ENCODE measurements at regions of chr9 and their contacts with region 1.

Region 1: DNA sequence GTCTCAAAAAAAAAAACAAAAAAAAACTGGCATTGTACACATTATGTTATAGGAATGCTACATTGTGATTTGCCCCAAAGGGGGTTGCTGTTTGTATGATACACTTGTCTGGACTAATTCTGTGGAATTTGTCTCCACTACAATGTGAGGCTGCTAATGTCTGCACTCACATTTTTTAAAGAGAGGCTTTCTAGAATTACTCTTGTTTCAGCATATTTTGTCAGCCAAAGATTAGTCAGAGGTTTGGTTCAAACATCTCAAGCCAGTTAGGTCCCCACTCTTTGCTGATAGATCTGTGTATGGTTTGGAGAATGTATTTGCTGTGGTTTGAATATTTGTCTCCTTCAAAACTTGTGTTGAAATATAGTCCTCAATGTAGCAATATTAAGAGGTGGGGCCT is 59.3 kb upstream of the ZNF169 start:
- DNase-seq: no peak
- ATAC-seq: no peak
- H3K4me3 ChIP-seq: no peak overlapping the region
- H3K4me3 Mint-ChIP-seq: no peak overlapping the region
- H3K27ac ChIP-seq: no peak overlapping the region
- H3K27ac Mint-ChIP-seq: peak overlapping the region in 1 of 9 donors; percentile 27
- H3K4me1 ChIP-seq: no peaks in the 10 kb centered on the region
- H3K4me1 Mint-ChIP-seq: peaks cover 0 to 6% (median 0%) of the 10 kb centered on the region in 7 donors
- H3K27me3 ChIP-seq: no peaks in the 10 kb centered on the region
- H3K27me3 Mint-ChIP-seq: peaks cover 0 to 7% (median 0%) of the 10 kb centered on the region in 5 donors

Region 2: DNA sequence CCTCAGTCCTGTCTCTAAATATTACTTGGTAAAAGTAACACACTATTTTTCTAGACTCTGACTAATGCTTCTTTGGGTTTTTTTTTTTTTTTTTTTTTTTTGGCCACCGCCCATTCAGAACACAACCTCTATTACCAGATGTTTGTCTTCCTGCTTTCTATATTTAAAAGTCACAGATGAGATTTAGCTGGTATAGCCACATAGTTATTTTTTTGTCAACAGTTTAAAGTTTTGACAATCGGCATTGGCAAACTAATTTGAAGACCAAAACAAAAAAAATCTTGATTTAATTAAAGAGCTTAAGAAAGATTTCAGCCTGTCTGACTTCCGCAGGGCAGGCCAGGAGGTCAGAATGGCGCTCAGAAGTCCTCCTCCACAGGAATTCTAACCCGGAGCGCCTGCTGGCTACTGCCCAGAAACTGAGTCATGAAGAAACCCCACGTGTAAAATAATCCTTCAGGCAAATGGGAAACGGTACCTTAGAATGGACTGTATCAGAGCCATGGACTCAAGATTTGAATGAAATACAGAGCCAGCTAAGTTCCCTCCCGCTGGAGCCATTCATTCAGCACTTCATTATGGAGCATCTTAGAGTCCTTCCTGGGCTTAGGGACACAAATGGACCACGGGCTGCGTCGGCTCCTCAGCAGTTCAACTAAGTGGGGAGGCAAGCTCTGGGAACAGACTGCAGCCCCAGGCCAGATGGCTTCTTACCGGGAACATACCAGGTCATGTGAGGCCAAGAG is 59.9 kb before region 1 on chr9:
- CTCF ChIA-PET with region 1: no interaction called
- POLR2A ChIA-PET with region 1: no interaction called
- intact Hi-C with region 1: loop called in 1 of 2 experiments (anchors 10 kb)
- DNase-seq: no peak
- ATAC-seq: no peak
- H3K4me3 ChIP-seq: no peak overlapping the region
- H3K4me3 Mint-ChIP-seq: no peak overlapping the region
- H3K27ac ChIP-seq: no peak overlapping the region
- H3K27ac Mint-ChIP-seq: no peak overlapping the region
- H3K4me1 ChIP-seq: no peaks in the 10 kb centered on the region
- H3K4me1 Mint-ChIP-seq: peaks cover 0 to 6% (median 0%) of the 10 kb centered on the region in 7 donors
- H3K27me3 ChIP-seq: peaks cover 0 to 3% of the 10 kb centered on the region in 2 donors
- H3K27me3 Mint-ChIP-seq: peaks cover 0 to 5% (median 0%) of the 10 kb centered on the region in 5 donors

Region 3: DNA sequence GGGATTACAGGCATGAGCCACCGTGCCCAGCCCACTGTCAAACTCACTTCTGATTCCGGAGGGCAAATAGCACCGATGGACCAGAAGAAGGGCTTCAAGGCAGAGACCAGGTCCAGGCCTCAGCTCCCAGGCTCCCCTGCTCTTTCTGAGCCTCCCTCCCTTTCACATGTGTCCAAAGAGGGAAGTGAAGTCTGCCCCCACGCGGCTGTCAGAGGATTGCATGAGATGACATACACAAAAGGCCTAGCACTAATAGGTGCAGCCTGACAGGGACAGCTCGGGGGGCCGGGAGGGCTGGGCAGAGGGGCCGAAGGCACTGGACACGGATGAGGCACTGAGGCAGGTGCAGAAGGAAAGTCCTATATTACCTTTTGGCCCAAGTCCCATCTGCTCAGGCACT is 423.5 kb after region 1 on chr9:
- CTCF ChIA-PET with region 1: no interaction called
- POLR2A ChIA-PET with region 1: no interaction called
- intact Hi-C with region 1: no loop called
- DNase-seq: no peak
- ATAC-seq: peak; percentile 52
- H3K4me3 ChIP-seq: no peak overlapping the region
- H3K4me3 Mint-ChIP-seq: no peak overlapping the region
- H3K27ac ChIP-seq: no peak overlapping the region
- H3K27ac Mint-ChIP-seq: no peak overlapping the region
- H3K4me1 ChIP-seq: no peaks in the 10 kb centered on the region
- H3K4me1 Mint-ChIP-seq: peaks cover 0 to 16% (median 11%) of the 10 kb centered on the region in 7 donors
- H3K27me3 ChIP-seq: no peaks in the 10 kb centered on the region
- H3K27me3 Mint-ChIP-seq: peaks cover 0 to 6% (median 0%) of the 10 kb centered on the region in 5 donors